ENCODE measurements at regions of chr13 and their contacts with region 1.

Region 1: DNA sequence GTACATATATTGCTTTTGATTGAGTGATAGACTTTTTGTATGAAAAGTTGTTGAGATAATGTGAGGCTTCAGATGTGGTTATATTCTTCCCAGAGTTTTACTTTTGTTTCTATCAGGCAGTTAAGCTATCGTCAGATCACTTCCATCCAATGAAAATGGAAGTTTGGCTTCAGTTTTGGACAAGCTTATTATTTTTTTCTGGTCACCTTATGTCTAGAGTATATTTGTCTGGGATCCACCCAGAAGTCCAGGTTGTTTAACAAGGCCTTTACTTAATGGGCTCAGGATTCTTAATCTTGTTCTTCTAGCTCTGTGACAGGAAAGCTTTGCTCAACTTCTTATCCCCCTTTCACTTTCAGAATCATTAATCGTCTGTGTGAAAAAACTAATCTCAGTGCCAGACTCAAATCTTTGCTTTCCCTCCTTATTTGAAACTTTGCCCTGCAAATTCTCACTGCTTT is 150.9 kb downstream of the PDS5B start:
- DNase-seq: no peak
- H3K4me3 ChIP-seq: no peak overlapping the region
- H3K27ac ChIP-seq: no peak overlapping the region
- H3K27me3 ChIP-seq: no peaks in the 10 kb centered on the region
- CTCF ChIP-seq: no peak

Region 2: DNA sequence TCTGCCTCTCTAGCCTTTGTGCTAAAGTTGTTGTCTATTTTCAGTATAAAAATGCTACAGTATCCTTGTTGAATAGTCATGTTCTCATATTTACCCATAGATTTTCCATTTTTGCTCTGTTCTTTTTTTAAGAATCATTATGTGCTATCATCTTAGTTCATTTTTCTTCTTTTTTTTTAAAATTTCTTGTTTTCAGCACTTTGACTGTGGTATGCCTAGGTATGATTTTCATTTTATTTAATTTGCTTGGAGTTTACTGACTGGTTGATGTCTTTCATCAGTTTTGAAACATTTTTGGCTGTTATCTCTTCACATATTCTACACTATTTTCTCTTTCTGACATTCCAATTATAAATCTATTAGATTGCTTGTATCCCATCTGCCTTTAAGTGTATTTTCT is 42.0 kb after region 1 on chr13:
- CTCF ChIA-PET with region 1: no interaction called
- POLR2A ChIA-PET with region 1: no interaction called
- DNase-seq: no peak
- H3K4me3 ChIP-seq: no peak overlapping the region
- H3K27ac ChIP-seq: no peak overlapping the region
- H3K27me3 ChIP-seq: no peaks in the 10 kb centered on the region
- CTCF ChIP-seq: no peak

Region 3: DNA sequence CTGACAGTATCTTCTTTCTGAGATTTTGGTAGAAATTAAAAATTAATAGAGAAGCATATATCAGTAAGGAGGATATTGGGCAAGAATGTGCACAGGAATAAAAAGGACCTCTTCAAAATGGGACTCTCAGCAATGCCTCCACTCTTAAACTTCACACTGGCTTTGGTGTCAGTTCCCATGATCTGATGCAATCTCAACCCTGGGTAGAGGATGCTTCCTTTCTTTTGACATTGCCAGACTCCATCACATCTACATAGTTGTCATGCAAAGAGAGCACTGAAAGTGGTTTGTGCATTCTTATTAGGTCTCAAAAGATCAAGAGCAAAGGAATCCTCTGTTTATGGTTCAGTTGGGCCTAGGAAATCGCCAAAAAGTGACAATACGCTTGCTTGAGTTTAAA is 522.2 kb after region 1 on chr13:
- CTCF ChIA-PET with region 1: interaction called, 11 read pairs
- POLR2A ChIA-PET with region 1: no interaction called
- DNase-seq: no peak
- H3K4me3 ChIP-seq: no peak overlapping the region
- H3K27ac ChIP-seq: no peak overlapping the region
- H3K27me3 ChIP-seq: no peaks in the 10 kb centered on the region
- CTCF ChIP-seq: no peak